ENCODE measurements at regions of chr6 and their contacts with region 1.

Region 1: DNA sequence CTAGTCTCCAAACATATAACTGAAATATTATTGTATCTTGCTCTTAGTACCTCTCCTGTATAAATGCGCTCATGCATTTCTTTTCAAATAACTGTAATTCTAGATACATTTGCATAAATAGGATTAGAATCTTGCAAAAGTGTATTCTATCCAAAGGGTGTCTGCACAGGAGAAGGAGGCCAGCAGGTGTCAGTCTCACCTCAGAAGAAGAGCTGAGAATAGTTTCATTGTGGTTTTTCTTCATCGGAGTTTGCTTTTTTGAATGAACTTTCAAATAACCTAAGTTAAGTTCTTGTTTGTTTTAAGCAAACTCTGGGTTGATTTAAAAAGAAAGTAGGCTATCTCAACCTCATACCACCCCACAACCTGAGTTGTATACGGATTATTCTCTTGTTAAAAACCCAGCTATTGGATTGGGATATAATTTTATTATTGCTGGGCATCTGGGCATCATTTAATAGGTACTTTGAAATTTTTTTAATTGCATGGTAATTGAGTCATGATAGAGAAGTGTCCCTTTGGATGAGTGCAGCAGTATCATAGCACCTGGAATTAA is 125.0 kb upstream of the MLIP start:
- DNase-seq: peak; percentile 27 to 52
- ATAC-seq: peak; percentile 57 to 86 (median 74)
- H3K4me3 ChIP-seq: no peak overlapping the region
- H3K27ac ChIP-seq: peak overlapping the region; percentile 61
- H3K4me1 ChIP-seq: peaks cover 23% of the 10 kb centered on the region
- H3K27me3 ChIP-seq: no peaks in the 10 kb centered on the region
- CTCF ChIP-seq: peak; percentile 91

Region 2: GRCh38 chr6:54140811-54141210 is 154.6 kb after region 1 on chr6:
- intact Hi-C with region 1: loop called in 1 of 2 experiments (anchors 10 kb)
- DNase-seq: no peak
- ATAC-seq: no peak
- H3K4me3 ChIP-seq: no peak overlapping the region
- H3K27ac ChIP-seq: no peak overlapping the region
- H3K4me1 ChIP-seq: peaks cover 15% of the 10 kb centered on the region
- H3K27me3 ChIP-seq: no peaks in the 10 kb centered on the region
- CTCF ChIP-seq: no peak

Region 3: DNA sequence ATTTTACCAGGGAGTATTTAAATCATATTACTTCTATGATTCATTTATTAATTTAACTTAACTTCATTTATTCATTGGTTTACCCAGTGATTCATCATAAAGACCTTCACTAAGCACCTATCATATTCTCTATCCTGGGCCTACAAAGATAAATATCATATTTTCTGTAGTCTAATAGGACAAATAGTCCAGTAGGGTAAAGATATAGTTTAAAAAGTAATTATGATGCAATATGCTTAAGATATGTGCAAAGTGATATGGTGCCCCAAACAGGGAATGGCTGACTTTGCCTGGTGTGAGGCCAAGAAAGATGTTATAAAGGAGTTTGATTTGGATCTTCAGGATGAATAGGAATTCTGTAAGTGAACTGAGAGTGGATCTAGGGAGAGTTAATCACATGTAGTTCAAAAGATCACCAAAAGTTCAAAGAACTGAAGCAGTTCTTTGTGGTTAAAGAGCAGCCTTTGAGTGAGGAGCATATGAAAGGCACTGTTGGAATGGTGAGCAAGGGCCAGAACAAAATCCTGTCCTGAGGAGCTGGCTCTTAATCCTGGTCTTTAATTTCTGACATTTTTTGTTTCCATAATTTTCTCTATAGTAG is 170.5 kb after region 1 on chr6:
- intact Hi-C with region 1: loop called in 1 of 2 experiments (anchors 10 kb)
- DNase-seq: no peak
- ATAC-seq: peak in 2 of 4 donors; percentile 18 to 35
- H3K4me3 ChIP-seq: no peak overlapping the region
- H3K27ac ChIP-seq: peak overlapping the region; percentile 31
- H3K4me1 ChIP-seq: peaks cover 7% of the 10 kb centered on the region
- H3K27me3 ChIP-seq: no peaks in the 10 kb centered on the region
- CTCF ChIP-seq: no peak

Region 4: GRCh38 chr6:54267798-54268197 is 281.6 kb after region 1 on chr6:
- intact Hi-C with region 1: loop called (anchors 10 kb)
- DNase-seq: no peak
- ATAC-seq: peak in 2 of 4 donors; percentile 23 to 30
- H3K4me3 ChIP-seq: no peak overlapping the region
- H3K27ac ChIP-seq: no peak overlapping the region
- H3K4me1 ChIP-seq: peaks cover 13% of the 10 kb centered on the region
- H3K27me3 ChIP-seq: no peaks in the 10 kb centered on the region
- CTCF ChIP-seq: no peak

Region 5: GRCh38 chr6:54291146-54291545 is 304.9 kb after region 1 on chr6:
- intact Hi-C with region 1: no loop called
- DNase-seq: no peak
- ATAC-seq: peak in 2 of 4 donors; percentile 51 to 59
- H3K4me3 ChIP-seq: no peak overlapping the region
- H3K27ac ChIP-seq: no peak overlapping the region
- H3K4me1 ChIP-seq: no peaks in the 10 kb centered on the region
- H3K27me3 ChIP-seq: no peaks in the 10 kb centered on the region
- CTCF ChIP-seq: no peak

Measured in psoas muscle (tissue), 8 donors.